IMR-90 (cell line): ENCODE measurements at regions of chr2 and their contacts with region 1.

Region 1: GRCh38 chr2:39436592-39437510 is at the start of gene MAP4K3:
- DNase-seq: peak; percentile 94
- ATAC-seq: peak; percentile 89
- H3K4me3 ChIP-seq: peak within 1 kb of the TSS; percentile 97
- H3K27ac ChIP-seq: peak within 1 kb of the TSS; percentile 87
- H3K4me1 ChIP-seq: peaks cover 17% of the 10 kb centered on the region
- H3K27me3 ChIP-seq: no peaks in the 10 kb centered on the region
- CTCF ChIP-seq: no peak
- POLR2A ChIP-seq: peak; percentile 76
- RAD21 ChIP-seq: no peak
- total RNA-seq, gene MAP4K3: 32.6 and 48.3 TPM in 2 replicates

Region 2: GRCh38 chr2:39379643-39380524 is 57.0 kb before region 1 on chr2:
- CTCF ChIA-PET with region 1: interaction called, 3 read pairs
- POLR2A ChIA-PET with region 1: no interaction called
- dilution Hi-C with region 1: no loop called
- in situ Hi-C with region 1: no loop called
- intact Hi-C with region 1: loop called (anchors 2 kb)
- DNase-seq: peak; percentile 68
- ATAC-seq: peak; percentile 76
- H3K4me3 ChIP-seq: no peak overlapping the region
- H3K27ac ChIP-seq: no peak overlapping the region
- H3K4me1 ChIP-seq: peaks cover 10% of the 10 kb centered on the region
- H3K27me3 ChIP-seq: no peaks in the 10 kb centered on the region
- CTCF ChIP-seq: peak; percentile 63
- POLR2A ChIP-seq: no peak
- RAD21 ChIP-seq: peak; percentile 67

Region 3: GRCh38 chr2:39504790-39505335 is 68.0 kb after region 1 on chr2:
- CTCF ChIA-PET with region 1: no interaction called
- POLR2A ChIA-PET with region 1: no interaction called
- dilution Hi-C with region 1: no loop called
- in situ Hi-C with region 1: loop called (anchors 5 kb)
- intact Hi-C with region 1: no loop called
- DNase-seq: peak; percentile 89
- ATAC-seq: peak; percentile 8
- H3K4me3 ChIP-seq: no peak overlapping the region
- H3K27ac ChIP-seq: peak overlapping the region; percentile 99
- H3K4me1 ChIP-seq: peaks cover 33% of the 10 kb centered on the region
- H3K27me3 ChIP-seq: no peaks in the 10 kb centered on the region
- CTCF ChIP-seq: no peak
- POLR2A ChIP-seq: no peak
- RAD21 ChIP-seq: no peak

Region 4: DNA sequence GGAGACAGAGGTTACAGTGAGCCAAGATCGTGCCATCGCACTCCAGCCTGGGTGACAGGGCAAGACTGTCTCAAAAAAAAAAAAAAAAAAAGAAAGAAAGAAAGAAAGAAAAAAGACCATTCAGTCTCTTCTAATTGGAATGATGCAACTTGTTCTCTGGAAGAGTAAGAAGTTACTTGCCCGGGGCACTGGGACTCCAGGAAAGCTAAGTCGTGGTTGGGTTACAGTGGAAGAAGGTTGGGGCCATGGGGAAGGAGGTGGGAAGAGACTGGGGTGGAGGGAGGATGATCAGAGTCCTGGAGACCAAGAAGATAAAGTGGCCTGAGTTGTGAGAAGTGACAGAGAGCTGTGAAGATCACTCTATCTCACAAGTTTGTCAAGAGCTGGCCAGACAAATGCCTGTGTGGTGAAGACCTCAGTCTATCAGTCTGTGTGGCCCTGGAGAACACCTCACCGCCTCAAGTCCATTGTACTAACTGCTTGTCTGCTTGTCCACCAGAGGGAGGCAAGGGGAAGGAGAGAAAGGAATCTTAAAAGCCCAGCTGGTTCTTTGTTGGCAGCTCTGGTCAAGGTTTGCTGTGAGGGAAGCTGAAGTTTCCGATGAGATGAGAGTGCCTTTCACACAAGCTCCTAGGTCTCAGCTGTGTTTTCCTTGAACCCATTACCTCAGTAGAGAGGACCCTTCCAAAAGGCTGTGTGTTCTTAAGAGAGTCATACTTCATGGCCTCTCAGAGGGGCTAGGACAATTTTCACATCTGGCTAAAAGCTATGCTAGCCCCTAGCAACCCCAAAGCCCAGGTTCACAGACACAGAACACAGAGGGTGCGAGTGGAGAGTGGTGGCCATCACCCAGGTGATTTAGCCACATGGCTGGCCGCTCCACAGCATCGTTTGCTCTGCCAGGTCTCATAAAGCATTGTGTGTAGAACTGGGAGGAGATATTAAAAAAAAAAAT is 156.9 kb after region 1 on chr2:
- CTCF ChIA-PET with region 1: no interaction called
- POLR2A ChIA-PET with region 1: no interaction called
- dilution Hi-C with region 1: no loop called
- in situ Hi-C with region 1: no loop called
- intact Hi-C with region 1: loop called (anchors 5 kb)
- DNase-seq: peak; percentile 88
- ATAC-seq: peak; percentile 98
- H3K4me3 ChIP-seq: no peak overlapping the region
- H3K27ac ChIP-seq: no peak overlapping the region
- H3K4me1 ChIP-seq: peaks cover 5% of the 10 kb centered on the region; the same call in 1 of the 2 replicates
- H3K27me3 ChIP-seq: no peaks in the 10 kb centered on the region
- CTCF ChIP-seq: peak; percentile 79
- POLR2A ChIP-seq: no peak
- RAD21 ChIP-seq: peak; percentile 80